ENCODE measurements at regions of chr11 and their contacts with region 1.

Region 1: DNA sequence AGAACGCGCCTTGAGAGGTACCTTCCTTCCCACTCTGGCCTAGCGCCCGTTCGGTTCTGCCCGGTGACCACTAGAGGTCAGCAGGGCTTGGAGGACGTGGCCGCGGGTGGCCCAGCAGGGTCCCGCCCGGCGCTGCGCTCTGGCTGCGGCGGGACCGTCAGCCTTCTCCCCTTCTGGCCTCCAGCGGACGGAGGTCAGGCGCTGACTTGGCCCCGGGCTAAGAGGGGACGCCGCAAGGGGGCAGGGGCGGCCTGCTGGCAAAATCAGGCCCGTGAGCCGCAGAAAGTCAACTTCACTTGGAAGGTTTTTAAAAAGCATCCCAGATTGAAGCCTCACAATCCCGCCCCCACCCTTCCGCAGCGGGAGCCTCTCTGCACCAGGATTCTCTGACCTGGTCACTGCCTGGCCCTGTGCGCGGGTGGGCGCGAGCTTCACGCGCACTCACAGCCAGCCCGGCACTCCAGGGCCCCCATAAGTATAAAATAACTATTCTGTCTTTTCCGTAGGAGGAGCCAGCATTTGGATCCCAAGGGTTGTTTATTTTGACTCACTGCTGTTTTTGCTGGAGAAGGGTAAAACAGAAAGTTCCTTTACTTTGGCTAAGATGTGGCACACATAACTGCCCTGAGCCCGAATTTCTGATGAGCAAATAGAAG is 23.2 kb upstream of the ZBTB16 start:
- DNase-seq: peak; percentile 84 to 89
- ATAC-seq: peak; percentile 92 to 97 (median 95)
- H3K4me3 ChIP-seq: peak overlapping the region in 9 of 10 donors; percentile 15 to 58 (median 50)
- H3K27ac ChIP-seq: peak overlapping the region in 9 of 10 donors; percentile 23 to 80 (median 67)
- H3K4me1 ChIP-seq: peaks cover 0 to 19% (median 13%) of the 10 kb centered on the region in 9 donors
- H3K27me3 ChIP-seq: no peaks in the 10 kb centered on the region
- CTCF ChIP-seq: peak; percentile 70 to 98 (median 95)

Region 2: GRCh38 chr11:114053406-114053805 is 17.1 kb after region 1 on chr11:
- intact Hi-C with region 1: loop called in 2 of 10 experiments (anchors 2 kb)
- DNase-seq: no peak
- ATAC-seq: no peak
- H3K4me3 ChIP-seq: no peak overlapping the region
- H3K27ac ChIP-seq: no peak overlapping the region
- H3K4me1 ChIP-seq: peaks cover 0 to 33% (median 15%) of the 10 kb centered on the region in 9 donors
- H3K27me3 ChIP-seq: peaks cover 0 to 18% (median 0%) of the 10 kb centered on the region in 7 donors
- CTCF ChIP-seq: no peak

Region 3: DNA sequence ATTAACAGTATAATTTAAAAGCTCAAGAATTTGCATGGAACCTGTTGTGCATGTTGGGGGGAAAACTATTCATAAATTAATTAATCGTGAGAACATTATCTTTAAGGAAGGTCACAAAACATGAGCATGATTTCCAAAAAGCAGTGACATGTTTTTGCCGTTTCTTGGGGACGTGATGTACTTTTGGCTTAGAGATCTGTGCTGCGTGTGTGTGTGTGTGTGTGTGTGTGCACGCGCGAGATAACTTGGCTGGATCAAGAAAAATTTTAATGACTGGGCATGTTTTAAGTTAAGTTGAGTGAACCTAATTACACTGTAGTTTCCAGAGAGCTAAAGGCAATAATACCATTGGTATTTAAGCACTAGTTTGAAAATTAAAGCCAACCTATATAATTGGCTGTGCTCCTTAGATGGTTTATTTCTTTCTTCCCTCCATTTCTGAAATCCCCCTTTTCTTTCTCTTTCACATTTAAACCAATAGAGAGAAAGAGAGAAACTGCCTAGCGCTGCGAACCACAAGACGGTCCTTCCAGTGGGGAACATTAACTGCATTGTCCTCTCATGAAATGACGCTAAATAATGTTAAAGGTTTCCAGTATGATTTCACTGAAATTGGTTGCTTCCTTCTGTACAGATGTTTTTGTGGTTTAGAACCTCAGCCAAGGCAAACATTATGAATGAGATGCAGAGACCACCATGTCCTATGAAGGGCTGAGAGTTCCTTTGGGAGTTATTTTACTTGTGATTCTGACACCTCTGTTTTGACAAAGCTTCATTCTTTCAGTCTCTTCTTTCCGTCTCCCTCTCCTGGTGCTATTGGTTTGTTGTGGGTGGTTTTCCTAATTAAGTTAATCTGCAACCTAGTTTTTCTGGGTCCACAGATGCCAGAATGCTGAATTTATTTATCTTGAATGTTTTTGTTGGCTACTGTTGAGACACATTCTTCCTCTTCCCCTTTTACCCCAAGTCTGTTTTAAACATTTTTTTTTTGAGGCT is 75.0 kb after region 1 on chr11:
- intact Hi-C with region 1: loop called in 1 of 10 experiments (anchors 5 kb)
- DNase-seq: peak; percentile 40 to 58
- ATAC-seq: peak in 7 of 8 donors; percentile 35 to 72 (median 57)
- H3K4me3 ChIP-seq: peak overlapping the region in 8 of 10 donors; percentile 3 to 40 (median 32)
- H3K27ac ChIP-seq: peak overlapping the region; percentile 50 to 85 (median 75)
- H3K4me1 ChIP-seq: peaks cover 34 to 97% (median 85%) of the 10 kb centered on the region in 9 donors
- H3K27me3 ChIP-seq: no peaks in the 10 kb centered on the region
- CTCF ChIP-seq: peak in 2 of 9 donors; percentile 17 to 19

Region 4: GRCh38 chr11:114121804-114122504 is 85.7 kb after region 1 on chr11:
- intact Hi-C with region 1: no loop called
- DNase-seq: no peak
- ATAC-seq: peak in 2 of 8 donors; percentile 22 to 23
- H3K4me3 ChIP-seq: no peak overlapping the region
- H3K27ac ChIP-seq: peak overlapping the region in 5 of 10 donors; percentile 12 to 60 (median 29)
- H3K4me1 ChIP-seq: peaks cover 32 to 94% (median 89%) of the 10 kb centered on the region in 9 donors
- H3K27me3 ChIP-seq: no peaks in the 10 kb centered on the region
- CTCF ChIP-seq: no peak

Region 5: DNA sequence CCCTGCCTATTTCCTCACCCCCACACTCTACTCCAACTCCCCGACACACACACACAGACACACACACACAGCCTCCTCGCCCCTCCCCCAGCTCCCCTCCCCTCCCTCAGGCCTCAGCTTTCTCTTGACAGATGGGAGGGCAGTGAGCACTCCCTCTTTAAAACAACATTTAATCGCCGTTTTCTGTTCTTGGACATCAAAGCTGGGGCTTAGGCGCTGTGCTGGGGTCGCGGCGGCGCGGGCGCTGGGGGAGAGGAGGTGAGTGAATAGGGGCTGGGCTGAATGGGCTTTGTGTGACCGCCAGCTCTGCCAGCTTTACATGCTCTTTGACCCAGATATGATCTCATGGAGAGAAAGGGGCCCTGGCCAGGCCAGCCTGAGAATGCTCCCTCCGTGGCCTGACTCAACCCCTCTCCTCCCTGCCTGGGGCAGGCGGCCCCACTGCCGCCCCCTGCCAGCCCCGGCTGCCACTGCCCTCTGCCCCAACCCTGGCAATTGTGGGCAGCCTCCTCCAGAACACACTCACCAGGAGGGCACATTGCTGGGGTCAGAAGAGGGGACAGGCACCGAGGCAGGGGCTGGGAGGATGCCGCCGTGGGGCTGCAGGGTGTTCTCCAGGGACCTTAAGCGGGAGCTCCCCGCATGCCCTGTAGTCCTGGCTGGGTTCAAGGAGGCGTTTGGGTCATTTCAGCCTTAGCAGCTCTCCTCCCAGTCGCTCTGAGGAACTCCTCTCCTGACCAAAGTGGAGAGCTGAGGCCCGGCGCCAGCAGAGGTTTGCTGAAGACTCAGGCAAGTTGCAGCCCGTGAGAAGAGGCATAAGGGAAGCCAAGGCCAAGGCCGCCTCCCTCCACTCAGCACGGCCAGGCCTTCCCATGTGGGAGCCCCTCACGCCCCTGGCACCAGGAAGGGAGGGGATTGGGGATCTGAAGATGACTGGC is 221.6 kb after region 1 on chr11:
- intact Hi-C with region 1: loop called (anchors 1 to 5 kb)
- DNase-seq: peak; percentile 53 to 68
- ATAC-seq: peak; percentile 49 to 76 (median 62)
- H3K4me3 ChIP-seq: peak overlapping the region in 7 of 10 donors; percentile 6 to 36 (median 25)
- H3K27ac ChIP-seq: peak overlapping the region; percentile 28 to 87 (median 73)
- H3K4me1 ChIP-seq: peaks cover 20 to 60% (median 56%) of the 10 kb centered on the region in 9 donors
- H3K27me3 ChIP-seq: no peaks in the 10 kb centered on the region
- CTCF ChIP-seq: peak in 7 of 9 donors; percentile 13 to 57 (median 45)

Region 6: GRCh38 chr11:114262681-114263512 is 226.6 kb after region 1 on chr11:
- intact Hi-C with region 1: loop called (anchors 1 to 5 kb)
- DNase-seq: peak in 1 of 2 donors; percentile 43
- ATAC-seq: peak; percentile 26 to 57 (median 50)
- H3K4me3 ChIP-seq: no peak overlapping the region
- H3K27ac ChIP-seq: peak overlapping the region in 1 of 10 donors; percentile 28
- H3K4me1 ChIP-seq: peaks cover 19 to 48% (median 39%) of the 10 kb centered on the region in 9 donors
- H3K27me3 ChIP-seq: no peaks in the 10 kb centered on the region
- CTCF ChIP-seq: peak; percentile 38 to 81 (median 70)